ENCODE measurements at regions of chr12 and their contacts with region 1.

Region 1: DNA sequence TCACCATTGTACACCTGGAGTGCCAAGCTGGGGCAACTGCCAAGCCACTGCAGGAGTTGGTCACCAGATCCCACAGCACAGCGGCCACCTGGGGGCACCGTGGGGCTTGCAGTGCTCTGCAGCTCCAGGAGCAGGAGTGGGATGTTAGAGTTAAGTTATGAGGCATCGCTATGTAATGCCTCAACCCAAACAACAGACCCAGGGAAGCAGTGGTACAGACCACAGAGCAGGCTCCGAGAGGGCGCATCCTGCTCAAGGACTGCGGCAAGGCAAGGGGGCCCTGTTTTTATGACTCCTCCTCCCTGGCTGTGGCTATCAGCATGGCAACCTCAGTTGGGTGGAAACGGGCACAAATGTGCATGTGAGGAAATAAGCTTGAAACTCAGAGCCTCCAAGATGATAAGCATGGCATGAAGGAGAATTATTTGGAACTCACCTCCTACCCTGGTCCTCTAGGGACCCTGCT is 63.1 kb downstream of the ARL6IP4 start:
- DNase-seq: peak; percentile 87 to 92
- H3K4me3 ChIP-seq: no peak overlapping the region
- H3K27ac ChIP-seq: peak overlapping the region; percentile 60 to 89 (median 78)
- H3K4me1 ChIP-seq: peaks cover 15 to 64% (median 42%) of the 10 kb centered on the region in 4 donors
- H3K27me3 ChIP-seq: no peaks in the 10 kb centered on the region
- CTCF ChIP-seq: peak in 5 of 7 experiments; percentile 49 to 82 (median 67)
- EP300 ChIP-seq: no peak
- POLR2A ChIP-seq: no peak

Region 2: DNA sequence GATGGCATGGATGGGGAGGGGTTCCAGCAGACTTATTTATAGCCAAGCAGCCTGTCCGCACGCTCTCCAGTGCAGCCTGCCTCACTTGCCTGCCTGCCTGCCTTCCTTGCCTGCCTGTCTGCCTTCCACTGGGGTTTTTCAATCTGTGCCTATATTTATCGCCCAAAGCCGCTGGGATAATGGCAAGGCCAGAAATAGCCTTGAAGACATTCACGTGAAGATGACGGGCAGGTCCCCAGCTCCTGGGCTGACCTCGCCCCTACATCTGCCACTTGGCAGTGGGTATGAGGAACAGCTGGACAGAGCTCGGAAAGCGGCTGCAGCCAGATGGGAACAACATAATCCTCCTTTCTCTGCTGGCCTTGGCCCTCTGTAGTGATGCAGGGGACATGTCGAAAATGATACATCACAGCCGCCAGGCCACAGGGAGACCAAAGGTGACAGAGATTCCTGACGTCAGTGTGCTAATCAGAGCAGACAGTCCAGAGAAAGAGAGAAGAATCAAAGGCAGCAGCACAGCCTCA is 54.1 kb after region 1 on chr12:
- intact Hi-C with region 1: no loop called
- DNase-seq: peak; percentile 28 to 63
- H3K4me3 ChIP-seq: no peak overlapping the region
- H3K27ac ChIP-seq: peak overlapping the region; percentile 33 to 82 (median 49)
- H3K4me1 ChIP-seq: peaks cover 28 to 64% (median 46%) of the 10 kb centered on the region in 4 donors
- H3K27me3 ChIP-seq: no peaks in the 10 kb centered on the region
- CTCF ChIP-seq: no peak
- EP300 ChIP-seq: peak; percentile 75
- POLR2A ChIP-seq: no peak

Region 3: DNA sequence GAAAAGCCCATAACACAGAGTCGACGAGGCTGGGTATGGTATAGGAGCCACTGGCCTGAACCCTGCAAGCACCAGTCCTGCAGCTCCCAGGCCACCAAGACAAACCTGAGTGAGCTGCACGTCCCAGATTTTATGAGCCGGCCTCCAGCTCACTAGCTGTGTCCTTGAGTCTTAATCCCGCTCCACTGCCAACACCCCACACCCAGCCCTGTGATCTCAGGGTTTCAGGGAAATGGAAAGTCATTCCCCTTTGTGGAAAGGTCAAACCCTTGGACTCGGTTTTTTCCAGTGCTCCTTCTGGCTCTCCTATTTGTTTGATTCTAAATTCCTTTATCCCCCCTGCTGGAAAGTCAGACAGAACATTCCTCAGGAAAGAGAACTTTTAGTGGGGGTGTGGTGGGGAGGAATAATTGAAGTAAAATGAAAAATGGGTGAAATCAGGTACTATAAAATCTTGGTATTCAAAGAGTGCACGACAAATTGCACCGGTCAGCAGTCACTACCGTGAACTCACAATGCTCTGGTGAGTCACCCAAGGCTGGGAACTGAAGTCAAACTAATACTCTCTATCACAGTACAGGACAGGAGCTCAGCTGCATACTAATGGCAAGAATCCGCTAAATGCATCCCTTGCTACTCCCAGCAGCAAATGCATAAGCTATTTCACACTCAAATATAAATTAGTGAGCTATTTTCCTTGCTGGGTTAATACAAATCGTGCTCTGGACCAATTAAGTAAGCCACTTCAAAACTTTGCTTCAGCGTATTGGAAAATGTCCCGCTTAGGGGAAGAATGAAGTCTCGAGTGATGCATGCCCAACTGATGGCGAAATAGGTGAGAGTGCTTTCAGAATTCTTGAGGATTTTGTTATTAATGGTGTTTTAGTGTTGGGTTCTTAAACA is 98.3 kb after region 1 on chr12:
- intact Hi-C with region 1: loop called (anchors 10 kb)
- DNase-seq: peak; percentile 64 to 72
- H3K4me3 ChIP-seq: no peak overlapping the region
- H3K27ac ChIP-seq: peak overlapping the region; percentile 65 to 92 (median 87)
- H3K4me1 ChIP-seq: peaks cover 37 to 61% (median 46%) of the 10 kb centered on the region in 4 donors
- H3K27me3 ChIP-seq: no peaks in the 10 kb centered on the region
- CTCF ChIP-seq: no peak
- EP300 ChIP-seq: no peak
- POLR2A ChIP-seq: no peak

Region 4: GRCh38 chr12:123346946-123347345 is 303.4 kb after region 1 on chr12:
- intact Hi-C with region 1: no loop called
- DNase-seq: no peak
- H3K4me3 ChIP-seq: no peak overlapping the region
- H3K27ac ChIP-seq: no peak overlapping the region
- H3K4me1 ChIP-seq: peaks cover 0 to 14% (median 0%) of the 10 kb centered on the region in 4 donors
- H3K27me3 ChIP-seq: no peaks in the 10 kb centered on the region
- CTCF ChIP-seq: no peak
- EP300 ChIP-seq: no peak
- POLR2A ChIP-seq: no peak